ENCODE measurements at regions of chr12 and their contacts with region 1.

Region 1: GRCh38 chr12:3371018-3371417 is 120.0 kb upstream of the PRMT8 start:
- DNase-seq: no peak
- ATAC-seq: no peak
- H3K4me3 ChIP-seq: no peak overlapping the region
- H3K27ac ChIP-seq: no peak overlapping the region
- H3K4me1 ChIP-seq: no peaks in the 10 kb centered on the region
- H3K27me3 ChIP-seq: peaks cover 10% of the 10 kb centered on the region; the same call in 1 of the 2 replicates
- CTCF ChIP-seq: no peak

Region 2: GRCh38 chr12:3453990-3454675 is 83.1 kb after region 1 on chr12:
- CTCF ChIA-PET with region 1: no interaction called
- POLR2A ChIA-PET with region 1: interaction called, 10 read pairs
- intact Hi-C with region 1: no loop called
- DNase-seq: peak; percentile 94
- ATAC-seq: peak; percentile 84
- H3K4me3 ChIP-seq: 0 out of 2 replicates have a peak overlapping the region, but pooled peaks have one; percentile 9
- H3K27ac ChIP-seq: peak overlapping the region; percentile 60
- H3K4me1 ChIP-seq: peaks cover 25% of the 10 kb centered on the region
- H3K27me3 ChIP-seq: no peaks in the 10 kb centered on the region
- CTCF ChIP-seq: no peak